B cell (primary cell): ENCODE measurements at regions of chr6 and their contacts with region 1.

Region 1: GRCh38 chr6:336159-337019 is 44.1 kb downstream of the DUSP22 start:
- DNase-seq: peak; percentile 80
- ATAC-seq: peak; percentile 58
- H3K4me3 ChIP-seq: peak overlapping the region in 3 of 5 experiments; percentile 10 to 47 (median 19)
- H3K4me3 Mint-ChIP-seq: peak overlapping the region; percentile 76
- H3K27ac ChIP-seq: peak overlapping the region; percentile 79 to 84
- H3K27ac Mint-ChIP-seq: peak overlapping the region; percentile 90
- H3K4me1 ChIP-seq: peaks cover 85 to 94% of the 10 kb centered on the region in 2 donors
- H3K4me1 Mint-ChIP-seq: peaks cover 59% of the 10 kb centered on the region
- H3K27me3 ChIP-seq: no peaks in the 10 kb centered on the region
- H3K27me3 Mint-ChIP-seq: no peaks in the 10 kb centered on the region
- CTCF ChIP-seq: no peak

Region 2: DNA sequence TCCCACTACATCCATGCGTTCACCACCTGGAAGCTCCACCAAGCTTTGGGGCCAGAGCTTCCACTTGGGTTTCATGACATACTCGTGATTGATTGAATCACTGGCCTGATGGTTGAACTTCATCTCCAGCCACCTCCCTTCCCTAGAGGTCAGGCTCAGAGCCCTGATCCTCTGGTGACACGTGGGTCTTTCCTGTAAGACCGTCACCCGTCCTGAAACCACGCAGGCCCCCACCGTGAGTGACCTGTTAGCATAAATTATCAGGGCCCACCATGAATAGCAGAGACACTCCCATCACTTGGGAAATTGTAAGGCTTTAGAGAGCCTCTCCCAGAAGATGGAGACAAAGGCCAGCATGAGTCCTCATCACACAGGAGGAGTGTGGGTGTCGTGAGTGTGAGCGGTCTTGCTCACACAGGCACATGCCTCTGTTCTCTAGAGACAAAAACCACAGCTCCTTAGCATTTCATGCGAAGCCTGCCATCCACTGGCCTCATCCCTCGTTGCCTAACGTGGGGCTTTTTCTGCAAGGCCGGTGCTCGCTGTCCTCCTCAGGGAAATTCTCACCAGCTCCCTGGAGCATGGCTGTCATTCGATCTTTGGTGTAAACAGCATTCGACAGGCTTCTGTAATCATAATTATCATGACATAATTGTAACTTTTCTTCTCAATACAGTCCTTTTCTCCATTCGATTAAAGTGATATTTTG is 109.2 kb before region 1 on chr6:
- CTCF ChIA-PET with region 1: interaction called, 3 read pairs
- POLR2A ChIA-PET with region 1: no interaction called
- intact Hi-C with region 1: loop called (anchors 5 kb)
- DNase-seq: peak; percentile 78
- ATAC-seq: peak; percentile 92
- H3K4me3 ChIP-seq: no peak overlapping the region
- H3K4me3 Mint-ChIP-seq: peak overlapping the region; percentile 42
- H3K27ac ChIP-seq: no peak overlapping the region
- H3K27ac Mint-ChIP-seq: peak overlapping the region; percentile 20
- H3K4me1 ChIP-seq: peaks cover 28 to 34% of the 10 kb centered on the region in 2 donors
- H3K4me1 Mint-ChIP-seq: peaks cover 43% of the 10 kb centered on the region
- H3K27me3 ChIP-seq: no peaks in the 10 kb centered on the region
- H3K27me3 Mint-ChIP-seq: no peaks in the 10 kb centered on the region
- CTCF ChIP-seq: peak; percentile 45

Region 3: DNA sequence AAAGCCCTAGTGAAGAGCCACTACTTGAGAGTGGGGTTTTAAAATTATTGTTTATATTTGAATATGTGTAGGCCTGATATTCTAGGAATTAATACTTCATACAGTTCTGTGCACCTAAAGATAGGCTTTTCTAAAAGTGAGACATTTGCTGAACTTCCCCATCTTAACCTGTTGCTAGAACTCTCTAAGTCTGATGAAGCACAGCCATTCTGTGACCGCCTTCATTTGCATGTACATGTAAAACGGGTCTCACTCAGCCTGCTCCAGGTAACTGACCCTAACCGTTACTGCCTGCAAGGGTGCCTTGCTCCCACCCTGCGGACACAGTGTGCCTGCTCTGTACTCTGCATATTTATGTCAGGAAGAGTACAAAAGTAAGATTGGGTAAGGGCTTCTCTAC is 10.8 kb after region 1 on chr6:
- CTCF ChIA-PET with region 1: interaction called, 3 read pairs
- POLR2A ChIA-PET with region 1: interaction called, 3 read pairs
- intact Hi-C with region 1: loop called (anchors 1 kb)
- DNase-seq: peak; percentile 87
- ATAC-seq: peak; percentile 94
- H3K4me3 ChIP-seq: no peak overlapping the region
- H3K4me3 Mint-ChIP-seq: peak overlapping the region; percentile 66
- H3K27ac ChIP-seq: peak overlapping the region; percentile 54 to 60
- H3K27ac Mint-ChIP-seq: peak overlapping the region; percentile 86
- H3K4me1 ChIP-seq: peaks cover 31 to 75% of the 10 kb centered on the region in 2 donors
- H3K4me1 Mint-ChIP-seq: peaks cover 60% of the 10 kb centered on the region
- H3K27me3 ChIP-seq: no peaks in the 10 kb centered on the region
- H3K27me3 Mint-ChIP-seq: no peaks in the 10 kb centered on the region
- CTCF ChIP-seq: no peak

Region 4: DNA sequence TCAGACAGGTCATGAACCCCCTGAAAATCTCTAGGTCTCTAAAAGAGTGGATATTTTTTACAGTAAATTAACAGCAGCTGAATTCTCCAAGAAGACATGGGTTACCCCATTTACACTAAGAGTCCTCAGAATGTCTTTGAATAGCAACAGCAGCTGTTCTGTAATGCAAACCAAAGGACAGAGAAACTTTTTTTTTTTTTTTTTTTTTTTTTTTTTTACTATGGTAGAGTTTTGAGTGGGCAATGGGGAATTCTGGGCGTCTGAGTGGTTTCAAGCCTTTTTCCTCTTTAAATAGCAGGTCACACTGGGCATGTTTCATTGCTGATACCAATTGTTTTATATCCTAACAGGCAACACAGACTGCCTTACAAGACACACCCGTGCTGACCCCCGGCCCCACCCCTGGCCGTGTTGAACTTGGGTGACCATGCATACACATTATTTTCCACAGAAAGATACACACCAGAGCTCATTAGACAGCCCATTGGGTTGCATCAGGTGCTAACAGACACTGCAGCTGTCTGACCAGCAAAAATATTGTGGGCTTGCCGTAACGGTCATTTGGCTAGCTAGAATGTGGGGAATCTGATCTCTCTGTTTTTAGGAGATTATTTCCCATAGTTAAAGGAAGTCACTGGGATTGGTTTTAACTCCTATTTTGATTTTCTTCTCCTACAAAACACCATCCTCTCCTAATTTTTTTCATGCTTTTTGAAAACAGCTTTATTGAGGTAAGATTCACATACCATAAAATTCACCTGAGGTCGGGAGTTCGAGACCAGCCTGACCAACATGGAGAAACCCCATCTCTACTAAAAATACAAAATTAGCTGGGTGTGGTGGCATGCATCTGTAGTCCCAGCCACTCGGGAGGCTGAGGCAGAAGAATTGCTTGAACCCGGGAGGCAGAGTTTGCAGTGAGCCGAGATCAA is 28.5 kb after region 1 on chr6:
- CTCF ChIA-PET with region 1: interaction called, 3 read pairs
- POLR2A ChIA-PET with region 1: interaction called, 10 read pairs
- intact Hi-C with region 1: no loop called
- DNase-seq: no peak
- ATAC-seq: peak; percentile 58
- H3K4me3 ChIP-seq: no peak overlapping the region
- H3K4me3 Mint-ChIP-seq: peak overlapping the region; percentile 64
- H3K27ac ChIP-seq: no peak overlapping the region
- H3K27ac Mint-ChIP-seq: peak overlapping the region; percentile 55
- H3K4me1 ChIP-seq: peaks cover 24 to 42% of the 10 kb centered on the region in 2 donors
- H3K4me1 Mint-ChIP-seq: peaks cover 57% of the 10 kb centered on the region
- H3K27me3 ChIP-seq: no peaks in the 10 kb centered on the region
- H3K27me3 Mint-ChIP-seq: peaks cover 11% of the 10 kb centered on the region
- CTCF ChIP-seq: no peak

Region 5: GRCh38 chr6:391559-392440 is 55.4 kb after region 1 on chr6 and contains the start of gene IRF4:
- CTCF ChIA-PET with region 1: interaction called, 5 read pairs
- POLR2A ChIA-PET with region 1: interaction called, 4 read pairs
- intact Hi-C with region 1: loop called (anchors 5 kb)
- DNase-seq: peak; percentile 90
- ATAC-seq: peak; percentile 70
- H3K4me3 ChIP-seq: peak within 1 kb of the TSS; percentile 63 to 98 (median 93)
- H3K4me3 Mint-ChIP-seq: peak within 1 kb of the TSS; percentile 95
- H3K27ac ChIP-seq: peak within 1 kb of the TSS; percentile 71 to 82
- H3K27ac Mint-ChIP-seq: peak within 1 kb of the TSS; percentile 99
- H3K4me1 ChIP-seq: peaks cover 35 to 43% of the 10 kb centered on the region in 2 donors
- H3K4me1 Mint-ChIP-seq: peaks cover 51% of the 10 kb centered on the region
- H3K27me3 ChIP-seq: no peaks in the 10 kb centered on the region
- H3K27me3 Mint-ChIP-seq: no peaks in the 10 kb centered on the region
- CTCF ChIP-seq: no peak
- total RNA-seq, gene IRF4: 129 and 142 TPM in 2 replicates